Esophagus squamous epithelium (tissue), 5 donors: ENCODE measurements at regions of chr11 and their contacts with region 1.

Region 1: GRCh38 chr11:75388386-75389275 is 10.7 kb upstream of the RPS3 start:
- DNase-seq: no peak
- H3K4me3 ChIP-seq: no peak overlapping the region
- H3K27ac ChIP-seq: peak overlapping the region; percentile 9 to 54 (median 28)
- H3K4me1 ChIP-seq: peaks cover 0 to 22% (median 4%) of the 10 kb centered on the region in 3 donors
- H3K27me3 ChIP-seq: peaks cover 0 to 32% (median 0%) of the 10 kb centered on the region in 4 donors
- CTCF ChIP-seq: peak; percentile 55 to 85 (median 81)
- POLR2A ChIP-seq: no peak

Region 2: GRCh38 chr11:75280227-75280701 is 108.4 kb before region 1 on chr11:
- intact Hi-C with region 1: loop called (anchors 5 kb)
- DNase-seq: no peak
- H3K4me3 ChIP-seq: no peak overlapping the region
- H3K27ac ChIP-seq: peak overlapping the region in 2 of 4 donors; percentile 53 to 68
- H3K4me1 ChIP-seq: peaks cover 0 to 31% (median 11%) of the 10 kb centered on the region in 3 donors
- H3K27me3 ChIP-seq: no peaks in the 10 kb centered on the region
- CTCF ChIP-seq: peak; percentile 94 to 99 (median 98)
- POLR2A ChIP-seq: no peak

Region 3: GRCh38 chr11:75328426-75329277 is 60.0 kb before region 1 on chr11:
- intact Hi-C with region 1: loop called (anchors 10 kb)
- DNase-seq: no peak
- H3K4me3 ChIP-seq: no peak overlapping the region
- H3K27ac ChIP-seq: peak overlapping the region; percentile 26 to 79 (median 51)
- H3K4me1 ChIP-seq: peaks cover 13 to 72% (median 56%) of the 10 kb centered on the region in 3 donors
- H3K27me3 ChIP-seq: no peaks in the 10 kb centered on the region
- CTCF ChIP-seq: peak; percentile 22 to 70 (median 58)
- POLR2A ChIP-seq: no peak

Region 4: GRCh38 chr11:75351791-75352587 is 36.6 kb before region 1 on chr11:
- intact Hi-C with region 1: no loop called
- DNase-seq: no peak
- H3K4me3 ChIP-seq: peak overlapping the region; percentile 57 to 93 (median 74)
- H3K27ac ChIP-seq: peak overlapping the region; percentile 87 to 97 (median 92)
- H3K4me1 ChIP-seq: peaks cover 40 to 65% (median 46%) of the 10 kb centered on the region in 3 donors
- H3K27me3 ChIP-seq: no peaks in the 10 kb centered on the region
- CTCF ChIP-seq: peak in 1 of 6 experiments; percentile 10
- POLR2A ChIP-seq: peak in 1 of 4 donors; percentile 32

Region 5: GRCh38 chr11:75777461-75778110 is 389.0 kb after region 1 on chr11:
- intact Hi-C with region 1: no loop called
- DNase-seq: no peak
- H3K4me3 ChIP-seq: no peak overlapping the region
- H3K27ac ChIP-seq: no peak overlapping the region
- H3K4me1 ChIP-seq: no peaks in the 10 kb centered on the region
- H3K27me3 ChIP-seq: no peaks in the 10 kb centered on the region
- CTCF ChIP-seq: no peak
- POLR2A ChIP-seq: no peak